Common myeloid progenitor, CD34-positive (primary cell): ENCODE measurements at regions of chr4 and their contacts with region 1.

Region 1: GRCh38 chr4:7206385-7206784 is 14.0 kb downstream of the SORCS2 start:
- DNase-seq: peak in 1 of 3 donors; percentile 28
- H3K4me3 ChIP-seq: no peak overlapping the region
- H3K27ac ChIP-seq: no peak overlapping the region
- H3K4me1 ChIP-seq: peaks cover 0 to 9% (median 0%) of the 10 kb centered on the region in 4 experiments
- H3K27me3 ChIP-seq: peaks cover 0 to 61% (median 10%) of the 10 kb centered on the region in 5 experiments

Region 2: GRCh38 chr4:7194251-7195140 is 11.9 kb before region 1 on chr4:
- CTCF ChIA-PET with region 1: interaction called, 10 read pairs
- POLR2A ChIA-PET with region 1: no interaction called
- DNase-seq: peak in 1 of 3 donors; percentile 13
- H3K4me3 ChIP-seq: no peak overlapping the region
- H3K27ac ChIP-seq: no peak overlapping the region
- H3K4me1 ChIP-seq: peaks cover 0 to 5% (median 2%) of the 10 kb centered on the region in 4 experiments
- H3K27me3 ChIP-seq: peaks cover 0 to 96% (median 39%) of the 10 kb centered on the region in 5 experiments